Activated B cell treated with CpG ODN at 0.5 μM for 24 hours (primary cell): ENCODE measurements at regions of chr6 and their contacts with region 1.

Region 1: GRCh38 chr6:158819213-158819909 is at the start of gene EZR:
- DNase-seq: peak; percentile 80
- ATAC-seq: peak; percentile 66
- H3K4me3 Mint-ChIP-seq: peak within 1 kb of the TSS; percentile 100
- H3K27ac Mint-ChIP-seq: peak within 1 kb of the TSS; percentile 95
- H3K4me1 Mint-ChIP-seq: peaks cover 51% of the 10 kb centered on the region
- H3K27me3 Mint-ChIP-seq: no peaks in the 10 kb centered on the region
- CTCF ChIP-seq: no peak
- total RNA-seq, gene EZR: 488 and 489 TPM in 2 replicates

Region 2: GRCh38 chr6:158518191-158519127 is 300.9 kb before region 1 on chr6:
- CTCF ChIA-PET with region 1: no interaction called
- POLR2A ChIA-PET with region 1: no interaction called
- intact Hi-C with region 1: no loop called
- DNase-seq: peak; percentile 48
- ATAC-seq: peak; percentile 96
- H3K4me3 Mint-ChIP-seq: peak overlapping the region; percentile 81
- H3K27ac Mint-ChIP-seq: no peak overlapping the region
- H3K4me1 Mint-ChIP-seq: peaks cover 12% of the 10 kb centered on the region
- H3K27me3 Mint-ChIP-seq: peaks cover 40% of the 10 kb centered on the region
- CTCF ChIP-seq: no peak

Region 3: DNA sequence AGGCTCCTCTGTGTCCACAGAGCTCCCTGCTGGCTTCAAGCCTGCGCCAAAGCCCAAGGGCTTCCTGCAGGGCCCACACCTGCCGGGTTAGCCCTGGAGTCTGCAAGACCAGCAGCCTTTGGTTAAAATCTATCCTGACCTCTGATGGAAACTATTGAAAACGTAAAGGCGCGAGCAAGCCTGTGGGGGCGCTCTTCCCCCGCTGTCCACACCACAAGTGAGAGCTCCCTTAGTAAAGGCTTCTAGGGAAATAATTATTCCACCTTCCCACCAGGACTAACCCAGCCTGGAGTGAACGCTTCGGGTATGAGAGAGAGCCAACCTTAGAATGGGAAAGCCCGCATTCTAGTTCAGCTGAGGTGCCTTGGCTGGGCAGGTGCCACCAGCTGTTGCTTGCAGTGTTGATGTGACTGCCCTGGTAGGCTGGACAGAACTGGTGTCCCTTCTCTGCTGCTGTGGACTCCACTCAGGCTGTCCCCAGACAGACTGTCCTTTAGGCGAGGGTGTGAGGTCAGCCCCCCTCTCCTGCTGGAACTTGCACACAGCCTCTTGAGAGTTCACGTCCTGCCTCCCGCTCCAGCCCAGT is 100.8 kb before region 1 on chr6:
- CTCF ChIA-PET with region 1: no interaction called
- POLR2A ChIA-PET with region 1: interaction called, 46 read pairs
- intact Hi-C with region 1: loop called (anchors 2 kb)
- DNase-seq: no peak
- ATAC-seq: no peak
- H3K4me3 Mint-ChIP-seq: no peak overlapping the region
- H3K27ac Mint-ChIP-seq: peak overlapping the region; percentile 97
- H3K4me1 Mint-ChIP-seq: peaks cover 78% of the 10 kb centered on the region
- H3K27me3 Mint-ChIP-seq: no peaks in the 10 kb centered on the region
- CTCF ChIP-seq: no peak

Region 4: DNA sequence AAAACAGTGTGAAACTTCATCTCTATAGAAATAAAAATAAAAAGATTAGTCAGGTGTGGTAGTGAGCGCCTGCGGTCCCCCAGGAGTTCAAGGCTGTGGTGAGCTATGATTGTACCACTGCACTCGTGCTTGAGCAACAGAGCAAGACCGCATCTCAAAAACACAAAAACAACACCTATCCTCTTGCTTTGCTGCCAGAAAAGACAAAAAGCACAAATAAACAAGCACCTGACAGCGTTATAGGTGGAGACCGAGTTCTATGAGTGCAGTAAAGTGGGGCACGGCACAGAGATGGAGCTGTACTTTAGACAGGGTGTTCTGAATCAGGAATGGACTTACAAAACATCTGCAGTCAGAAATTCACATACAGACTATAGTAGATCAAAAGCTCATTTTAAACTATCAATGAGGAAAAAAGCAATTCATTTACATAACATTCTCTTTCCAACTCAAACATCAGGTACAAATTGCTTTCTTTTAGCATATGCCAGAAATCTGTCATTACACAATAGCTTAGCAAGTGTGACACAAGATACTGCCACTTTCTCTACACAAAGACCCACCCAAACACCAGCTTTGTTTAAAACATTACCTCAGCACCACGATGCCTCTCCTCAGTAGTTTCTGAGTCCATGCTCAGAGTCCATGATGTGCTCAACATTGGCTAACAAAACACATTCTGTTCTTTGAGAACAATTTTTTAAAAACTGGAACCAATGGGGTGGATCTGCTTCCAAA is 10.3 kb before region 1 on chr6:
- CTCF ChIA-PET with region 1: interaction called, 5 read pairs
- POLR2A ChIA-PET with region 1: interaction called, 33 read pairs
- intact Hi-C with region 1: loop called (anchors 1 kb)
- DNase-seq: peak; percentile 40
- ATAC-seq: peak; percentile 80
- H3K4me3 Mint-ChIP-seq: peak overlapping the region; percentile 67
- H3K27ac Mint-ChIP-seq: peak overlapping the region; percentile 94
- H3K4me1 Mint-ChIP-seq: peaks cover 98% of the 10 kb centered on the region
- H3K27me3 Mint-ChIP-seq: no peaks in the 10 kb centered on the region
- CTCF ChIP-seq: no peak

Region 5: GRCh38 chr6:158853072-158853871 is 33.9 kb after region 1 on chr6:
- CTCF ChIA-PET with region 1: interaction called, 4 read pairs
- POLR2A ChIA-PET with region 1: interaction called, 33 read pairs
- intact Hi-C with region 1: loop called (anchors 1 kb)
- DNase-seq: peak; percentile 68
- ATAC-seq: peak; percentile 87
- H3K4me3 Mint-ChIP-seq: no peak overlapping the region
- H3K27ac Mint-ChIP-seq: no peak overlapping the region
- H3K4me1 Mint-ChIP-seq: peaks cover 26% of the 10 kb centered on the region
- H3K27me3 Mint-ChIP-seq: no peaks in the 10 kb centered on the region
- CTCF ChIP-seq: no peak

Region 6: DNA sequence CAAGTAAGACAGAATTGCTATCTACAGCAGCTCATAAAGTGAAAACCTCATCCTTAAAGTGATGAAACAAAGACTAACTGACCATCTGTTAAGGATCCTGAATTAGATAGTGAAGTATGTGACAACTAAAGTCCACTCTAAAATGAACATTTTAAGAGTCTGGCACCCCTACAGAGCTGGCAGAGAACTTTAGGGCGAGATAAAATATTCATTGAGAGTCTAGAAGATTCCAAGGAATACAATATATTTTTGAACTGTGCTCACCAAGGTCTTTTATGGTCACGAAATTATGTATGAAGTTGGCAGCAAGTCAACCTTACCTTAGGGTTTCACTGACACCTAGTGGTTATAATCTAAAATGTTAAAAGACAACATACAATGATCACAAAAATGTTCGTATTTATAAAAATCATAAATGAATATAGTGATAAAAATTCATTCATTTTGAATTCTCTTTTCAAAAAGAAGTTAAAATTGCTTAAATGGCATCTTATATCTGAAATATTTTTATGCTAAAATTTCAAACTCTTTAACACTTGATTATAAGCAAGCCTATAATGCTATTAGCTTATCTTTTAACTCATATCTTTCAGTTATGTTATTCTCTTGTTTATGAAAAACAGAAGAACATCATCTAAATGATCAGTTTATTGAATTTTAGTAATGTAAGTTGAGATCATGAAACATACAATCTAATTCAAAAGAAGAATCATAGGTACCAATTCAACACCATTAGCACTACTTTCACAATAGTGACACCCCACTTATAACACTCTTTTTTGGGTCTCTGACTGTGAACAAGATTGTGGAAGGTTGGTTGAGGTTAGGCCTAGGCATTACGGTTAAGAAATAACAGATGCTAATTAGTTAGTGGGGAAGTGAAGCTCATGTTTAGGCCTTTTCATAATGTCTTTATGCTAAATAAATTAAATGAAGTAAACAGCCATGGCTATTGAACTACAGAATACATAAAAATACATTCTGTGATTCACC is 153.2 kb after region 1 on chr6:
- CTCF ChIA-PET with region 1: interaction called, 4 read pairs
- POLR2A ChIA-PET with region 1: interaction called, 4 read pairs
- intact Hi-C with region 1: loop called (anchors 1 kb)
- DNase-seq: no peak
- ATAC-seq: peak; percentile 60
- H3K4me3 Mint-ChIP-seq: no peak overlapping the region
- H3K27ac Mint-ChIP-seq: no peak overlapping the region
- H3K4me1 Mint-ChIP-seq: peaks cover 6% of the 10 kb centered on the region
- H3K27me3 Mint-ChIP-seq: no peaks in the 10 kb centered on the region
- CTCF ChIP-seq: peak; percentile 57